ENCODE measurements at regions of chr19 and their contacts with region 1.

Region 1: DNA sequence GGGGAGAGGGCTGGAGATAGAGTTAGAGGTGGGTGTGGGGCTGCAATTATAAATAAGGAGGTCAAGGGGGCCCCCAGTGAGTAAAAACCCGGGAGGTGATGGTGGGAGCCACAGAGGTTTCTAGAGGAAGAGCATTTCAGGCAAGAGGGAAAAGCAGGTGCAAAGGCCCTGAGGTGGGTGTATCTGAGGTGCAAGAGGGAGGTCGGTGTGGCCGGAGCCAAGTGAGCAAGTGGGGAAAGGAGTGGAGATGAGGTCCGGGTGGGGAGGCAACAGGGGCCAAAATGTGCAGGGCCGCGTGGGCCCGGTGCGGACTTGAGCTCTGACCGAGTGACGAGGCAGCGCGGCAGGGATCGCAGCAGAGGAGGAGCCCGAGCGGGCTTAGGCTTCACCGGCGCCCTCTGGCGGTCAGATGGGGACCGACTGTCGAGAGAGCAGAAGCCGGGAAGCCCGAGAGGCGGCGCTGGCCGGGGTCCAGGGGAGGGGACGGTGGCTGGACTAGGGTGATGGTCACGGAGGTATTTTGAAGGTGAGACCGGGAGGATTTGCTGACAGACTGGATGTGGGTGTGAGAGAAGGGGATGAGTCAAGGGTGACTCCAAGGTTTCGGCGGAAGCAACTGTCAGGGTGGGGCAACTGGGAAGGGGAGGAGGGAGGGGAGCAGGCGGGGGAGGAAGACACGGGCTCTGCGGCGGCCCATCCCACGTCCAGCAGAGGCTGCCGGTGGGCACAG is 17.7 kb upstream of the SPACA4 start:
- DNase-seq: peak; percentile 93 to 95
- ATAC-seq: peak; percentile 81 to 86 (median 85)
- H3K4me3 ChIP-seq: peak overlapping the region; percentile 60
- H3K27ac ChIP-seq: peak overlapping the region; percentile 41
- H3K4me1 ChIP-seq: peaks cover 4% of the 10 kb centered on the region
- H3K27me3 ChIP-seq: no peaks in the 10 kb centered on the region
- CTCF ChIP-seq: peak; percentile 90

Region 2: GRCh38 chr19:48310227-48310626 is 278.6 kb before region 1 on chr19:
- intact Hi-C with region 1: loop called in 1 of 2 experiments (anchors 10 kb)
- DNase-seq: no peak
- ATAC-seq: peak in 2 of 4 donors; percentile 19 to 41
- H3K4me3 ChIP-seq: no peak overlapping the region
- H3K27ac ChIP-seq: peak overlapping the region; percentile 0
- H3K4me1 ChIP-seq: peaks cover 18% of the 10 kb centered on the region
- H3K27me3 ChIP-seq: no peaks in the 10 kb centered on the region
- CTCF ChIP-seq: no peak

Region 3: GRCh38 chr19:48321622-48322591 is 266.9 kb before region 1 on chr19:
- intact Hi-C with region 1: loop called (anchors 10 kb)
- DNase-seq: peak; percentile 98 to 99
- ATAC-seq: peak; percentile 91 to 94 (median 92)
- H3K4me3 ChIP-seq: peak overlapping the region; percentile 70
- H3K27ac ChIP-seq: peak overlapping the region; percentile 93
- H3K4me1 ChIP-seq: peaks cover 14% of the 10 kb centered on the region
- H3K27me3 ChIP-seq: no peaks in the 10 kb centered on the region
- CTCF ChIP-seq: no peak

Region 4: DNA sequence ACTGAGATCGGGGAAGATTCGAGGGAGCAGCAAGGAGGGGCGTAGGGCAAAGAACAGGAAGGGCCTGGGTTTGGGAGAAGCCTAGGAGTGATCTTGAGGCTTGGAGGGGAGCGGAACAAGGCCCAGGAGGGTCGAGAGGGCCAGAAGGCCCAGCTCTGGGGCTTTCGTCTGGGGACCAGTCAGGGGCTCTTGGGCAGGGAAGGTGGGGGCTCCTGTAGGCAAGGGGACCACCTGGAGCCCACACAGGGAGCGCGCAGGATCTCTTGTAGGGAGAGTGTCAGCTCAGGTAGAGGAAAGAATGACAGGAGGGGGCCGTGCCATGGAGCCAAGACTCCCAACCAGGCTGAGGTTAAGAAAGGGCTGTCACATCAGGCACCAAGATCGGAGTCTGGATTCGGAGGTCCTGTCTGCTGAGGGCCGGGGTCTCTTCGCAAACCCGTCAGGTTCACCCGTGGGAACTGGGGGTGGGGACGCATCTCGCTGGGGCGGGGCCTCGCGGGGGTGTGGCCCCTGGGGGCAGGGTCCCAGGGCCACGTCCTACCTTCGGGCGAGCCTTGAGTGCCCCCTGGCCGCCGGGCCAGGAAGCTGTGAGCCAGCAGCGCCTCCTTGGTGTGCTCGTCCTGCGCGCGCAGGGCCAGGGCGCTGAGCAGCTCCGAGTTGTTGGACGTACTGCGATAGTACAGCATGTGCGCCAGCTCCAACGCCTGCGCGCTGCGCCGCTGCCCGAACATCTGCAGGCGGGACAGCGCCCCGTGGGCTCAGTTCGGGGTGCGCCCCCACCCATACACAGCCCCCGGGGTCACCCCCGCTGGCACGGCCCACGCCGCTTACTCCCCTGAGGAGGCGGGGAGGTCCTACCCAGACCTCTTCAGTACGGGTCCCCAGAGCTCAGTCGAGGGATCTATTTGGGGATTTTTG is 255.1 kb before region 1 on chr19:
- intact Hi-C with region 1: loop called (anchors 5 to 10 kb)
- DNase-seq: peak; percentile 91 to 94
- ATAC-seq: peak; percentile 29 to 59 (median 46)
- H3K4me3 ChIP-seq: peak overlapping the region; percentile 64
- H3K27ac ChIP-seq: peak overlapping the region; percentile 81
- H3K4me1 ChIP-seq: peaks cover 22% of the 10 kb centered on the region
- H3K27me3 ChIP-seq: no peaks in the 10 kb centered on the region
- CTCF ChIP-seq: peak; percentile 61

Region 5: DNA sequence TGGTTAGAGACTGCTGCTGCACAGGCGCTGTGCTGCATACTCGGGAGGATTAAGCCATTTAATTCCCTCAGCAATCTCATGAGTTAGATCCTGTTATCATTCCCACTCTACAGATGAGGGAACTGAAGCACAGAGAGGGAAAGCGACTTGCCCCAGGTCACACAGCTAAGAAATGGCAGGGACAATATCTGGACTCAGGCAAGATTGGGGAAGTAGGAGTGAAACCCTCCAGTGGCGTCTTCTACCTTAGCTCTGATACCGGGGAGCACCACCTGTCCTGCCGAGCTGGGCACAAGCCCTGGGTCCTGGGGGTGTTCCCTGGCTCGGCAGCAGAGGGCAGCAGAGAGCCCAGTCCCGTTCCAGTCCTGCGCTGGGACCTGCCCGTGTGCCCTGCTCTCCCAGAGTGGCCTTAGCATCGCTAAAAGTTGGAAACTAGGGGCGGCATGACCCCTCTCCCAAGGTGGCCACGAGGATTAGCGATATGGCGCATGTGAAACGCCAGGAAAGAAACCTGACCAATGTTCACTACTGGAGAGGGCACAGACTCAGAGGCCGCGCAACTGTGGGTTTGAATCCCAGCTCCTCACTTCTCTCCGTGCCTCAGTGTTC is 99.1 kb before region 1 on chr19:
- intact Hi-C with region 1: loop called (anchors 1 to 2 kb)
- DNase-seq: peak; percentile 76 to 88
- ATAC-seq: peak; percentile 52 to 71 (median 57)
- H3K4me3 ChIP-seq: no peak overlapping the region
- H3K27ac ChIP-seq: no peak overlapping the region
- H3K4me1 ChIP-seq: peaks cover 8% of the 10 kb centered on the region
- H3K27me3 ChIP-seq: peaks cover 0 to 37% (median 13%) of the 10 kb centered on the region in 3 donors
- CTCF ChIP-seq: peak; percentile 92